Sigmoid colon (tissue), 7 donors: ENCODE measurements at regions of chr6 and their contacts with region 1.

Region 1: DNA sequence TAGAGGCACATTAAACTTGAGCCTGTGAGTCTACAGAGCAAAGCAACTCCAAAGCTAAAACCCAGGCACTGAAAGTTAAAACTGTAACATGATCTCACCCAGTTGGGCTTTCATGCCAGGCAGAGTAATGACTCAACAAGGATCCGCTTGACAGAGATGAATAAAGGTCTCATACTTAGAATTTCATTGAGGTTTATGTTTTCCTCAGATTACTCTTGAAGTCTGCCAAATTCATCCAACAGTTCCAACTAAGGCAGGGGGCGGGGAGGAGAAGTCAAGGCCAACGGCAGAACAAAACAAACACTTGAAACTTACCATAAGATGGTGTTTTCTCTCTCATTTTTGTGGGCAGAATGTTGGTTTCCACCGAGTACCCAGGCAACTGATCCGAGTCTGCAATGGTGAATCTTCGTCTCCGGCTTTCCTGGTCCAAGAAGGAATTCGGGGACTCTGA is 54.0 kb upstream of the IPCEF1 start:
- DNase-seq: peak; percentile 75
- H3K4me3 ChIP-seq: no peak overlapping the region
- H3K27ac ChIP-seq: peak overlapping the region; percentile 79 to 90 (median 88)
- H3K4me1 ChIP-seq: peaks cover 0 to 44% (median 41%) of the 10 kb centered on the region in 4 donors
- H3K27me3 ChIP-seq: no peaks in the 10 kb centered on the region
- CTCF ChIP-seq: no peak
- EP300 ChIP-seq: peak in 3 of 4 donors; percentile 14 to 32 (median 25)
- POLR2A ChIP-seq: no peak

Region 2: GRCh38 chr6:154448448-154449096 is 37.9 kb after region 1 on chr6:
- intact Hi-C with region 1: loop called (anchors 2 kb)
- DNase-seq: peak; percentile 87
- H3K4me3 ChIP-seq: peak overlapping the region in 1 of 4 donors; percentile 20
- H3K27ac ChIP-seq: peak overlapping the region; percentile 79 to 90 (median 82)
- H3K4me1 ChIP-seq: peaks cover 0 to 78% (median 53%) of the 10 kb centered on the region in 4 donors
- H3K27me3 ChIP-seq: no peaks in the 10 kb centered on the region
- CTCF ChIP-seq: peak in 3 of 4 experiments; percentile 32 to 46 (median 41)
- EP300 ChIP-seq: peak; percentile 78 to 97 (median 88)
- POLR2A ChIP-seq: no peak

Region 3: GRCh38 chr6:154515826-154516225 is 105.2 kb after region 1 on chr6:
- intact Hi-C with region 1: loop called (anchors 1 kb)
- DNase-seq: no peak
- H3K4me3 ChIP-seq: peak overlapping the region in 2 of 4 donors; percentile 13 to 25
- H3K27ac ChIP-seq: peak overlapping the region in 2 of 4 donors; percentile 39
- H3K4me1 ChIP-seq: peaks cover 0 to 13% (median 10%) of the 10 kb centered on the region in 4 donors
- H3K27me3 ChIP-seq: no peaks in the 10 kb centered on the region
- CTCF ChIP-seq: no peak
- EP300 ChIP-seq: no peak
- POLR2A ChIP-seq: no peak

Region 4: DNA sequence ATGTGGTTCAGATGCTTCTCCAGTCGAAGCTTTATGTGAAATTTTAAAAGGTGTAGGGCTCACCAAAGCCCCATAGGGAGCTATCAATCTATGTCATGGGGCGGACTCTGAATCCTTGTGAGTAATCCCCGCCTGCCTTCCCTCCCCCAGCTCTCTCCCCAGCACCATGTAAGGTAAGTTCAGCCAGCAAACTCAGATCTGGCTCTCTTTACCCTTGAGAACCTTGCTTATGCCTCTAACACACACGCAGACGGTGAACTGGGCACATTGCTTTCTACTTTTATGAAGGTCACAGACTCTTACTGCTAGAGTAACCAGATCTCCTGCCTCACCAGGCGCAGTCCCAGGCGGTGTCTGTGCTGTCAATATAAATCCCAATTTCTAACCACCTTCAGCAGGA is 182.5 kb after region 1 on chr6:
- intact Hi-C with region 1: loop called (anchors 10 kb)
- DNase-seq: peak; percentile 91
- H3K4me3 ChIP-seq: no peak overlapping the region
- H3K27ac ChIP-seq: peak overlapping the region; percentile 52 to 88 (median 82)
- H3K4me1 ChIP-seq: peaks cover 0 to 27% (median 16%) of the 10 kb centered on the region in 4 donors
- H3K27me3 ChIP-seq: no peaks in the 10 kb centered on the region
- CTCF ChIP-seq: no peak
- EP300 ChIP-seq: peak; percentile 73 to 94 (median 82)
- POLR2A ChIP-seq: no peak